ENCODE measurements at regions of chr3 and their contacts with region 1.

Region 1: DNA sequence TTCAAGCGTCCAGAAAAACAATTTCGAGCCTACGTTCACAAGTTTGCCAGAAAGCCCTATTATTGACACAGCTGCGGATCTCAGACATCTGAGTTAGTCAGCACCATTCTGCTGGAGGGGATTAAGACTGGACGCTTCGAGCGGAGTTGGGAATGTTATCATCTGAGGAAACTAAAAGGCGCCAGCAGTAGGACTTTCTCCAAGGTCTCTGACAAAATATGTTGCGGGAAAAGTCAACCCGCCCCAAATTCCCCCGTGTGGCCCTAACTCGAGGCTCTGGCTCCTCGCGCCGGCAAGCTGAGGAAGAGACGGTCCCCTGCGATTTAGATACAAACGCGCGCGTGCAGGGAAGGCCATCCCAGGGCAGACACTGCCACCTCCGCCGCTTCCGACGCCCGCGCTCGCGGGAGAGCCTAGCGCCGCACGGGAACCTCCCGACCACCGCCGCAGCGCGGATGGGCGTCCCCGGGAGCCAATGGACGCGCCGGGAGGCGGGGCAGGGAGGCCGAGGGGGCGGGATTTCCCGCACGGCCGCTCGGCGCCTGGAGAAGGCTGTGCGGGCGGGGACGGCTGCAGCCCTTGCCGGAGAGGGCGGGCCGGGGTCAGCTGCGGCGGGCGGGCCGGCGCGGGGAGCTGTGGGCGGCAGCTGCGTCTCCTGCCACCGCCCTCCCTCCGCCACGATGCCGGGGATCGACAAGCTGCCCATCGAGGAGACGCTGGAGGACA is at the start of gene APPL1:
- DNase-seq: peak; percentile 94
- H3K4me3 Mint-ChIP-seq: peak within 1 kb of the TSS; percentile 89
- H3K27ac Mint-ChIP-seq: peak within 1 kb of the TSS; percentile 75
- H3K4me1 Mint-ChIP-seq: peaks cover 28% of the 10 kb centered on the region
- H3K27me3 Mint-ChIP-seq: no peaks in the 10 kb centered on the region
- total RNA-seq, gene APPL1: 34.7 to 34.9 TPM

Region 2: DNA sequence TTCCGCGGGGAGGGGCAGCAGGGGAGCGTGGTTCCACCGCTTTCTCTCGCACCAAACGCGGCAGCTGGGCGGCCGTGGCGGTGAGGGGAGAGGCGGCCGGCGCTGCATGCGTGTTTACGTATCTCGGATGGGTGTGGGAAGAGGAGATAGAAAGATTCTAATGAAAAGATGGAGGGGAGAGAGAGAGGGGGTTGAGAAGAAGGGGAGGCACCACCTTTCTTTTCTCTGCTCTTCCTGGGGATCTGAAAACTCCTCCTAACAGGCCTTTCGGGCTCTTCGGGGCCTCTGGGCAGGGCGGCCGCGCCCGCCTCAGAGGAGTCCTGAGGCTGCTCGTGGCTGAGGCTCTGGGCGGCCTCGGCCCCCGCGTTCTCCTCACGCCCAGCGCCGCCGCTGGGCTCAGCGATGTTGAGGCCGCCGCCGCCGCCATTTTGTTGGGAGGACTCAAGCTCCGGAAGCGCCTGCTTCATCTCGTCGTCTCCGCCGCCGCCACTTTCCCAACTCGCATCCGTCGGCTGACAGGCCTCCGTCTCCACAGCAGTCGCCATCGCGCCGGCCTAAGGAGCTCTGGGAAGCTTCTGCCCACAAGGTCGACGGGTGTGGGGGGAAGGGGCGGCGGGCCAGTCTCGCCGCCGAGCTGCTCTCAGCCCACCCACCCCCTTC is 544.8 kb before region 1 on chr3:
- CTCF ChIA-PET with region 1: no interaction called
- POLR2A ChIA-PET with region 1: no interaction called
- intact Hi-C with region 1: loop called (anchors 10 kb)
- DNase-seq: peak; percentile 83
- H3K4me3 Mint-ChIP-seq: peak overlapping the region; percentile 97
- H3K27ac Mint-ChIP-seq: peak overlapping the region; percentile 97
- H3K4me1 Mint-ChIP-seq: peaks cover 37% of the 10 kb centered on the region
- H3K27me3 Mint-ChIP-seq: no peaks in the 10 kb centered on the region

Region 3: DNA sequence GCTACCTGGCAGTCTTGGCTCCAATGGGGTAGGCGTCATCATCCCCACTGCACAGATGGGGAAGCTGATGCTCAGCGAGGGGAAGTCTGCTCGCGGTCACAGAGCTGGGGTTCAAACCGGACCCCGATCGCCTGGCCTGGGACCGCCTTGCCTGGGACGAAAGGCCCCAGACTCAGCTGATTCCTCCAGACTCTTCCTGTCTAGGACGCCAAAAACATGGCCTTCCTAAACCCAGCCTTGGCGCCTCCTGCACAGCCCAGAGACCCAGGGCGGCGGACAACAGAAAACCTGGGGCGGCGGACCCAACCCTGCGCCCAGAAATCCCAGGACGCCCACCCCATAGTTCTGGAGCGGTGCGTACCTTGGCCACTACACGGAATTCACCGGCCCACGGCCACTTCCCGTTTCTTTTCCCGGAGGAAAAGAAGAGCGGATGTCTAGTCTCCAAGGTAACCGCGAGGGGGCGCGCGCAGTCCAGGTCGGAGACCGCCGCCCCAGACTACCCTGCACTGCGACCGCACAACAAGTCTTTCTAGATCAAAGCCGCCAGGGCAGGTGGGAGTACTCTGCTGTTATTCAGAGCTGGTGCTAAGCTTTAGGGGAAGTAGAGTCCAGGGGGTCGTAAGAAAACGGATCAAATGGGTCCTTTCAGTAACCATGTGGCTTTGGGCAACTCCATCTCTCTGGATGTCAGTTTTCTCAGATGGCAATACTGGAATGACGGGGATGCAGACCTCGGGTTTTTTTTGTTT is 57.3 kb before region 1 on chr3:
- CTCF ChIA-PET with region 1: interaction called, 18 read pairs
- POLR2A ChIA-PET with region 1: no interaction called
- intact Hi-C with region 1: loop called (anchors 2 kb)
- DNase-seq: peak; percentile 75
- H3K4me3 Mint-ChIP-seq: peak overlapping the region; percentile 57
- H3K27ac Mint-ChIP-seq: no peak overlapping the region
- H3K4me1 Mint-ChIP-seq: peaks cover 4% of the 10 kb centered on the region
- H3K27me3 Mint-ChIP-seq: peaks cover 47% of the 10 kb centered on the region

Region 4: DNA sequence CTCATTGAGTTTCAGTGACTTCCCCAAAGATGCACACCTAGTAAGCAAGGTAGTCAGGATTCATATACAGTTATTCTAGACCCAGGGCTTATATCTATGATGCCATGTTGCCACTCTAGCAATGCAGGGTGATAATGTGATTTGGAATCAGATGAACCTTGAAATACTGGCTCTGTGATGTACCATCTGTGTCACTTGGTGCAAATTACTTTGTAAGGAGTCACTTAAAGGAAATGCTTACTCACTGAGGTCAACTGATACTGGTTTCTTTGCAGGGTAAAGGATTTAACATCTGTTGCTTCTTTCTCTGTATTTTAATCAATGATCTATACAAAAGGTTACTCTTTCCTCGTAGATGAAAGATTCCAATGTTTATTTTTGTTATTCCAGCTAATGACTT is 54.3 kb after region 1 on chr3:
- CTCF ChIA-PET with region 1: no interaction called
- POLR2A ChIA-PET with region 1: no interaction called
- intact Hi-C with region 1: no loop called
- DNase-seq: no peak
- H3K4me3 Mint-ChIP-seq: no peak overlapping the region
- H3K27ac Mint-ChIP-seq: no peak overlapping the region
- H3K4me1 Mint-ChIP-seq: no peaks in the 10 kb centered on the region
- H3K27me3 Mint-ChIP-seq: no peaks in the 10 kb centered on the region

Region 5: GRCh38 chr3:57555738-57556458 is 328.5 kb after region 1 on chr3 and contains the start of gene PDE12:
- CTCF ChIA-PET with region 1: no interaction called
- POLR2A ChIA-PET with region 1: no interaction called
- intact Hi-C with region 1: loop called (anchors 2 kb)
- DNase-seq: peak; percentile 89
- H3K4me3 Mint-ChIP-seq: peak within 1 kb of the TSS; percentile 97
- H3K27ac Mint-ChIP-seq: peak within 1 kb of the TSS; percentile 96
- H3K4me1 Mint-ChIP-seq: peaks cover 34% of the 10 kb centered on the region
- H3K27me3 Mint-ChIP-seq: no peaks in the 10 kb centered on the region
- total RNA-seq, gene PDE12: 20.7 to 21.9 TPM

Region 6: DNA sequence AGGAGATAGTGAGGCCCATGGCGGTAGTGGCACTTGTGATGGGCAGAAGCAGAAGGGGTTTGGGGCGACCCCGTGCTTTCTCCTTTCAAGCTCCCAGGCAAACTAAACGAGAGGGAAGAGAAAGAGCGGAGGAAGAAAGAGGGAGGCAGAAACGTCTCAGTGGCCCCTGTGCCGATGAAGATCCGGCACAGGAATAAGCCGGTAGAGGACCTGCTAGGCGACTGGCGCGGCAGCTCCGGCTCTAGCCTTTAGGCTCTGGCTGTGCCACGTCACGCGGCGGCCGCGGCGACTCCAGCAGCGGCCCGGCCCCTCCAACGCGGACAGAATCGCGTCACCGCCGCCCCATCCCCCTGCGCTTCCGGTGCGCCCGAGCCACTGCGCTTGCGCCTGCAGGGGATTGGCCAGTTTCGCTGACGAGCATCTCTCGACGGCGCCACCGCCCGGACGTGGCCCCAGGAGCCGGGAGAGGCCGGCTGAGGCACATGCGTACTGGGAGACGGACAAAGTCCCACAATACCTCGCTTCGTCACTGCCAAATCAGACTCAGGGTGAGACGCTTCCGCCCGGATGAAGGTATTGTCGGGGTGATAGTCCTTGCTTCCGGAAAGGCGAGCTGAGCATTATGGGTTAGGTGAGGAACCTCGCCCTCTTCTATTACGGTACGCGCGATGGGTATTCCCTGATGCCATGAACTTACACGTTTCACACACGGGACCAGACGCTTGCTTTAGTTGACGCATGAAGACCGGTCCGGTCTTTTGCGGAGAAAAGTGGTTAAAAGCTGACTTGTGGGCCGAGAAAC is 370.0 kb after region 1 on chr3 and contains the start of gene ARF4:
- CTCF ChIA-PET with region 1: no interaction called
- POLR2A ChIA-PET with region 1: no interaction called
- intact Hi-C with region 1: loop called (anchors 1 kb)
- DNase-seq: peak; percentile 100
- H3K4me3 Mint-ChIP-seq: peak within 1 kb of the TSS; percentile 97
- H3K27ac Mint-ChIP-seq: peak within 1 kb of the TSS; percentile 99
- H3K4me1 Mint-ChIP-seq: peaks cover 41% of the 10 kb centered on the region
- H3K27me3 Mint-ChIP-seq: no peaks in the 10 kb centered on the region
- total RNA-seq, gene ARF4: 66.6 to 68.8 TPM

Region 7: GRCh38 chr3:57692259-57693147 is 465.1 kb after region 1 on chr3 and contains the start of gene DENND6A:
- CTCF ChIA-PET with region 1: no interaction called
- POLR2A ChIA-PET with region 1: no interaction called
- intact Hi-C with region 1: loop called (anchors 2 kb)
- DNase-seq: peak; percentile 97
- H3K4me3 Mint-ChIP-seq: peak within 1 kb of the TSS; percentile 81
- H3K27ac Mint-ChIP-seq: peak within 1 kb of the TSS; percentile 92
- H3K4me1 Mint-ChIP-seq: peaks cover 36% of the 10 kb centered on the region
- H3K27me3 Mint-ChIP-seq: no peaks in the 10 kb centered on the region
- total RNA-seq, gene DENND6A: 13.0 to 16.0 TPM